Gastrocnemius medialis (tissue), 4 donors: ENCODE measurements at regions of chr18 and their contacts with region 1.

Region 1: GRCh38 chr18:23619388-23619881 is 33.1 kb upstream of the NPC1 start:
- DNase-seq: no peak
- ATAC-seq: no peak
- H3K4me3 ChIP-seq: peak overlapping the region; percentile 43 to 64 (median 46)
- H3K27ac ChIP-seq: no peak overlapping the region
- H3K4me1 ChIP-seq: no peaks in the 10 kb centered on the region
- H3K27me3 ChIP-seq: peaks cover 0 to 8% (median 2%) of the 10 kb centered on the region in 3 donors
- CTCF ChIP-seq: no peak
- POLR2A ChIP-seq: no peak

Region 2: DNA sequence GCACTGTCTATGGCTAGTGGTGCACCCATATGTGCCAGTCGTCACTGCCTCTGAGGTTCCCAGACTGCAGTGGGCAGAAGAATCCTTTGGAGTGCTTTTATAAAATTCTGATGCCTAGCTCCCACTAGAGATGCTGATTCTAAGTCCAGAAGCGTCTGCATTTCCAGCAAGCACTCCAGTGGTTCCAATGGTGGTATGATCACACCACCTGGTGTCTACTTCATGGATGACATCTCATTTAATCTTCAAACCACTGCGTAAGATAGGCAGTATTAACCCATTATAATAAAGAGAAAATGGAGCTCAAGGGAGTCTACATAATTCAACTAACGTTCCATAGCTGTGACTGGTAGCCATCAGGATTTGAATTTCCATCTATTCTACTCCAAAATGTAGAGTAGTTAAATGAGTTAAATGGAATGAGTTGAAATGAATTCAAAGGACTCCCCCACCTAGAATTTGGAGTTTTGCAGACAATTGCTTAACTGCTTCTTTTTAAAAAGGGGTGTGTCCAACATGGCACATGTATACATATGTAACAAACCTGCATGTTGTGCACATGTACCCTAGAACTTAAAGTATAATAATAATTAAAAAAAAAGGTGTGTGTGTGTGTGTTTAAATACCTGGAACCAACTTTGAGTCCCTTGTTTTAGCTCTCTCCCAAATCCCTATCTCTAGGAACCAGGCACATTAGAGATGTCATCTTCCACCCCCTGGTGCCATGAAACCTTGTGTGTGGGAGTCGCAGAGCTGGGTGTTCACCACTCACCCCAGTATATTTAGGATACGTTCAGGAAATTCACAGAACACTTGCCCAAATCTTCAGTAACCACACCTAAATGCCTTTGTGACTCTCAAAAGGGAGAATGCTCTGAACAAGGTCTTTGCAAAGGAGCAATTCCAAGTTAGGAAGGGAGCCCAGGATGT is 83.9 kb after region 1 on chr18:
- in situ Hi-C with region 1: loop called in 1 of 4 experiments (anchors 10 kb)
- intact Hi-C with region 1: loop called (anchors 1 kb)
- DNase-seq: no peak
- ATAC-seq: peak in 1 of 2 donors; percentile 50
- H3K4me3 ChIP-seq: no peak overlapping the region
- H3K27ac ChIP-seq: no peak overlapping the region
- H3K4me1 ChIP-seq: no peaks in the 10 kb centered on the region
- H3K27me3 ChIP-seq: no peaks in the 10 kb centered on the region
- CTCF ChIP-seq: peak; percentile 18 to 60 (median 44)
- POLR2A ChIP-seq: no peak

Region 3: GRCh38 chr18:23812546-23813440 is 193.4 kb after region 1 on chr18:
- in situ Hi-C with region 1: loop called in 2 of 4 experiments (anchors 5 to 10 kb)
- intact Hi-C with region 1: loop called (anchors 1 kb)
- DNase-seq: no peak
- ATAC-seq: no peak
- H3K4me3 ChIP-seq: no peak overlapping the region
- H3K27ac ChIP-seq: no peak overlapping the region
- H3K4me1 ChIP-seq: peaks cover 5 to 6% of the 10 kb centered on the region in 2 donors
- H3K27me3 ChIP-seq: no peaks in the 10 kb centered on the region
- CTCF ChIP-seq: peak; percentile 17 to 54 (median 25)
- POLR2A ChIP-seq: no peak